ENCODE measurements at regions of chr1 and their contacts with region 1.

Region 1: GRCh38 chr1:58783993-58784757 is at the start of gene JUN:
- DNase-seq: peak; percentile 99 to 100 (median 100)
- ATAC-seq: peak; percentile 87 to 95 (median 92)
- H3K4me3 ChIP-seq: peak within 1 kb of the TSS; percentile 59 to 99 (median 92)
- H3K27ac ChIP-seq: peak within 1 kb of the TSS; percentile 95 to 100 (median 99)
- H3K4me1 ChIP-seq: peaks cover 0 to 34% (median 19%) of the 10 kb centered on the region in 12 donors
- H3K27me3 ChIP-seq: no peaks in the 10 kb centered on the region
- CTCF ChIP-seq: peak in 5 of 12 donors; percentile 8 to 45 (median 31)
- POLR2A ChIP-seq: peak; percentile 37 to 100
- total RNA-seq, gene JUN: 57.1 to 128 (median 82.8) TPM

Region 2: GRCh38 chr1:58460469-58460868 is 323.7 kb before region 1 on chr1:
- intact Hi-C with region 1: no loop called
- DNase-seq: no peak
- ATAC-seq: no peak
- H3K4me3 ChIP-seq: no peak overlapping the region
- H3K27ac ChIP-seq: no peak overlapping the region
- H3K4me1 ChIP-seq: peaks cover 0 to 8% (median 0%) of the 10 kb centered on the region in 12 donors
- H3K27me3 ChIP-seq: no peaks in the 10 kb centered on the region
- CTCF ChIP-seq: no peak
- POLR2A ChIP-seq: no peak

Region 3: GRCh38 chr1:58755468-58755872 is 28.7 kb before region 1 on chr1:
- intact Hi-C with region 1: loop called in 1 of 10 experiments (anchors 1 kb)
- DNase-seq: peak; percentile 45 to 79 (median 62)
- ATAC-seq: peak; percentile 69 to 95 (median 94)
- H3K4me3 ChIP-seq: peak overlapping the region in 2 of 12 donors; percentile 24 to 25
- H3K27ac ChIP-seq: peak overlapping the region in 11 of 12 donors; percentile 41 to 80 (median 71)
- H3K4me1 ChIP-seq: peaks cover 0 to 31% (median 11%) of the 10 kb centered on the region in 12 donors
- H3K27me3 ChIP-seq: no peaks in the 10 kb centered on the region
- CTCF ChIP-seq: no peak
- POLR2A ChIP-seq: no peak

Region 4: DNA sequence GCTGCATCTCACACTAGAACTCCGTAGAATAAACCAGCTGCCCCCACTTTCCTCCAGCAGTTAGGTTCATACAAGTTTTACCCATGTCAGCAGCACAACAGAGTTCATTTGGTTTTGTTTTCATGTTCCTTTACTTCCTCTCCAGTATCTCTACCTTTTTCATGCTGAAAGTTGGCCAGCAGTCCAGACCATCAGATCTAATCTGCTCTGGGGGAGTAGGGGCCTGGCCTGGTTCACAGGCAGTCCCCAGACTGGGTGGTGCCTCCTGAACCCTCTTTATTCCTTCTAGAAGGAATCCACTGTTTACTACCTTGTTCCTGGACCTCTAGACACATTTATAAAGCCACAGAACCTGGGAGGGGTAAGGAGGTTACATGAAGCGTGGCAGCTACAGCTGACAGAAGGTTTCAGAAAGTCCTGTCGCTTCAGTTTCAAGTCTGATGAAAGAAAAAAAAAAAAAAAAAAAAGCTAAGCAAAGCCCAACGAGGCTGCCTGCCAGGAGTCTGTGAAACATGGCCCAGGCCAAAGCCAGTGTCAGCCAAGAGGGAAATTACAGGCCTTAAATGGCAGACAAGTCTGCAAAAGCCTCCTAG is 184.3 kb after region 1 on chr1:
- intact Hi-C with region 1: loop called in 2 of 10 experiments (anchors 2 to 10 kb)
- DNase-seq: peak; percentile 82 to 87 (median 85)
- ATAC-seq: peak; percentile 62 to 85 (median 78)
- H3K4me3 ChIP-seq: no peak overlapping the region
- H3K27ac ChIP-seq: peak overlapping the region; percentile 18 to 89 (median 80)
- H3K4me1 ChIP-seq: peaks cover 0 to 34% (median 18%) of the 10 kb centered on the region in 12 donors
- H3K27me3 ChIP-seq: no peaks in the 10 kb centered on the region
- CTCF ChIP-seq: no peak
- POLR2A ChIP-seq: no peak

Region 5: GRCh38 chr1:59046730-59047157 is 262.6 kb after region 1 on chr1:
- intact Hi-C with region 1: loop called in 1 of 10 experiments (anchors 10 kb)
- DNase-seq: no peak
- ATAC-seq: no peak
- H3K4me3 ChIP-seq: no peak overlapping the region
- H3K27ac ChIP-seq: peak overlapping the region in 1 of 12 donors; percentile 67
- H3K4me1 ChIP-seq: peaks cover 0 to 47% (median 16%) of the 10 kb centered on the region in 12 donors
- H3K27me3 ChIP-seq: no peaks in the 10 kb centered on the region
- CTCF ChIP-seq: peak in 1 of 12 donors; percentile 10
- POLR2A ChIP-seq: no peak

Region 6: DNA sequence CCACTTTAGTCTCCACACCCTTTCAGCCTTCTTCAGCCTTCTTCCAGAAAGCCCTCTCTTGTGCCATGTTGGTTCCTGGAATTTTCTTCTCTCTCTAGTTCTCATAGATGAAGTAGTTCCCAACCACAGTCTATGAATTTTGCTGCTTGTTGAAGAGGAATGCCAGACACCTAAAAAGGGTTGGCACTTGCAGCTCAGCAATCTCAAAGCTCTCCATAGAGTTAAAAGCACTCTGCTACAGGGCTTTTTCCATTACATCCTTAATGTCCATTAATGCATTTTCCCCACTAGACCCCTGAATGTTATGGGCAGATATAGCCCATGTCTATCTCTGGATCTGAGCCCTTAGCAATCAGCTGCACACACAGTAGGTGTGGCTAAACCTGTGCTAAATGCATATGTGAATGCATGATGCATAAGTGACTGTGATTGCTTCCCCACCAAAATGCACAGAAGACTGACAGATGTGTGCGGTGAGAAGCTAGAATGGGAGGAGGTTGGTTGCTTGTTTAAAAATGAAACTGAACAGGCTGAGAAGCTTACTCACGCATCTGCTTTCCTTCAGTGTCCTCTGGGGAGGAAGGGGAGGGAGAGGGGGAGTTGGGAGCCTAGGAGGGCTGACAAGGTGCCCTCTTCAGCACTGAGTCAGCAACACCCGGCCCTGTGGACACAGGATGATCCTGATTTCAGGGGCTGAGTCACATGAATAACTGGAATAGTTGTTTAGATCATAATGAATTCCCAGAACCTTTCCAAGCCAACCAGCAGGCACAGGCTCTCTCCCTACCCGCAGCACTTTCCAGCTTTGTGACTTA is 366.6 kb after region 1 on chr1:
- intact Hi-C with region 1: loop called in 3 of 10 experiments (anchors 2 to 5 kb)
- DNase-seq: peak; percentile 73 to 95 (median 78)
- ATAC-seq: peak; percentile 88 to 98 (median 96)
- H3K4me3 ChIP-seq: peak overlapping the region in 8 of 12 donors; percentile 16 to 45 (median 28)
- H3K27ac ChIP-seq: peak overlapping the region; percentile 19 to 94 (median 88)
- H3K4me1 ChIP-seq: peaks cover 0 to 49% (median 30%) of the 10 kb centered on the region in 12 donors
- H3K27me3 ChIP-seq: no peaks in the 10 kb centered on the region
- CTCF ChIP-seq: no peak
- POLR2A ChIP-seq: no peak

Region 7: DNA sequence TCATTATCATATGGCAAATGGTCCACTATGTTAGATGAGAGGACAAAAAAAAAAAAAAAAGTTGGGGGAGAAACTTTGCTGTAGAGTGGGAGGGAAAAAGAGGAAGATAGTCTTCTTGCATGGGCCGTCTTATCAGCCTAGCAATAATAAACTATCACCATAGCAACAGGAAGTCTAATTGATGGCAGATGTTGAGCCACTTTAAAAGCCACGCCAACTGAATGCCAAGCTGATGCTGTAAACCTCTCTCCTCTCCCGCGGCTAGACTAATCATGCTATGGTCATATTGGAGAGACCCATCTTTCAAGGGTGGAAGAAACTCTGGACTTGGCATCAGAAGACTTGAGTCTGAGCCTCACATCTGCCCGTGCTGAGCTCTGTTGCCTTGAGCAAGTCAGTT is 908.4 kb after region 1 on chr1:
- intact Hi-C with region 1: loop called in 4 of 10 experiments (anchors 5 to 10 kb)
- DNase-seq: peak in 1 of 5 donors; percentile 30
- ATAC-seq: peak in 3 of 4 donors; percentile 37 to 69 (median 60)
- H3K4me3 ChIP-seq: no peak overlapping the region
- H3K27ac ChIP-seq: no peak overlapping the region
- H3K4me1 ChIP-seq: peaks cover 0 to 44% (median 4%) of the 10 kb centered on the region in 12 donors
- H3K27me3 ChIP-seq: no peaks in the 10 kb centered on the region
- CTCF ChIP-seq: no peak
- POLR2A ChIP-seq: no peak

Measured in heart left ventricle (tissue), 16 donors.